H1 (cell line): ENCODE measurements at regions of chr5 and their contacts with region 1.

Region 1: GRCh38 chr5:118791926-118792734 is 196.2 kb downstream of the DTWD2 start:
- DNase-seq: peak in 1 of 2 experiments; percentile 2
- H3K4me3 ChIP-seq: no peak overlapping the region
- H3K27ac ChIP-seq: no peak overlapping the region
- H3K4me1 ChIP-seq: peaks cover 0 to 10% (median 4%) of the 10 kb centered on the region in 4 experiments; a peak in 5 of 7 replicates
- H3K27me3 ChIP-seq: no peaks in the 10 kb centered on the region
- CTCF ChIP-seq: peak in 2 of 3 experiments; percentile 65 to 81; a peak in 3 of 4 replicates
- EP300 ChIP-seq: no peak
- POLR2A ChIP-seq: no peak
- RAD21 ChIP-seq: peak; percentile 90 to 93

Region 2: GRCh38 chr5:118651002-118651401 is 141.1 kb before region 1 on chr5:
- CTCF ChIA-PET with region 1: interaction called, 12 read pairs
- POLR2A ChIA-PET with region 1: no interaction called
- DNase-seq: no peak
- H3K4me3 ChIP-seq: no peak overlapping the region
- H3K27ac ChIP-seq: no peak overlapping the region
- H3K4me1 ChIP-seq: peaks cover 0 to 2% (median 0%) of the 10 kb centered on the region in 4 experiments; a peak in 1 of 7 replicates
- H3K27me3 ChIP-seq: no peaks in the 10 kb centered on the region
- CTCF ChIP-seq: no peak
- EP300 ChIP-seq: no peak
- POLR2A ChIP-seq: no peak
- RAD21 ChIP-seq: no peak

Region 3: GRCh38 chr5:118692811-118693342 is 99.3 kb before region 1 on chr5:
- CTCF ChIA-PET with region 1: interaction called, 69 read pairs
- POLR2A ChIA-PET with region 1: no interaction called
- DNase-seq: peak in 1 of 2 experiments; percentile 1
- H3K4me3 ChIP-seq: no peak overlapping the region
- H3K27ac ChIP-seq: no peak overlapping the region
- H3K4me1 ChIP-seq: no peaks in the 10 kb centered on the region
- H3K27me3 ChIP-seq: no peaks in the 10 kb centered on the region
- CTCF ChIP-seq: peak in 2 of 3 experiments; percentile 24 to 47; a peak in 2 of 4 replicates
- EP300 ChIP-seq: no peak
- POLR2A ChIP-seq: no peak
- RAD21 ChIP-seq: peak; percentile 57 to 69

Region 4: GRCh38 chr5:118698774-118699173 is 93.4 kb before region 1 on chr5:
- CTCF ChIA-PET with region 1: interaction called, 69 read pairs
- POLR2A ChIA-PET with region 1: no interaction called
- DNase-seq: peak in 1 of 2 experiments; percentile 17
- H3K4me3 ChIP-seq: no peak overlapping the region
- H3K27ac ChIP-seq: no peak overlapping the region
- H3K4me1 ChIP-seq: no peaks in the 10 kb centered on the region
- H3K27me3 ChIP-seq: no peaks in the 10 kb centered on the region
- CTCF ChIP-seq: peak; percentile 46 to 73 (median 60)
- EP300 ChIP-seq: no peak
- POLR2A ChIP-seq: no peak
- RAD21 ChIP-seq: peak; percentile 82 to 86

Region 5: GRCh38 chr5:118752575-118753368 is 39.4 kb before region 1 on chr5:
- CTCF ChIA-PET with region 1: interaction called, 11 read pairs
- POLR2A ChIA-PET with region 1: no interaction called
- DNase-seq: no peak
- H3K4me3 ChIP-seq: no peak overlapping the region
- H3K27ac ChIP-seq: no peak overlapping the region
- H3K4me1 ChIP-seq: no peaks in the 10 kb centered on the region
- H3K27me3 ChIP-seq: no peaks in the 10 kb centered on the region
- CTCF ChIP-seq: no peak
- EP300 ChIP-seq: no peak
- POLR2A ChIP-seq: no peak
- RAD21 ChIP-seq: no peak

Region 6: DNA sequence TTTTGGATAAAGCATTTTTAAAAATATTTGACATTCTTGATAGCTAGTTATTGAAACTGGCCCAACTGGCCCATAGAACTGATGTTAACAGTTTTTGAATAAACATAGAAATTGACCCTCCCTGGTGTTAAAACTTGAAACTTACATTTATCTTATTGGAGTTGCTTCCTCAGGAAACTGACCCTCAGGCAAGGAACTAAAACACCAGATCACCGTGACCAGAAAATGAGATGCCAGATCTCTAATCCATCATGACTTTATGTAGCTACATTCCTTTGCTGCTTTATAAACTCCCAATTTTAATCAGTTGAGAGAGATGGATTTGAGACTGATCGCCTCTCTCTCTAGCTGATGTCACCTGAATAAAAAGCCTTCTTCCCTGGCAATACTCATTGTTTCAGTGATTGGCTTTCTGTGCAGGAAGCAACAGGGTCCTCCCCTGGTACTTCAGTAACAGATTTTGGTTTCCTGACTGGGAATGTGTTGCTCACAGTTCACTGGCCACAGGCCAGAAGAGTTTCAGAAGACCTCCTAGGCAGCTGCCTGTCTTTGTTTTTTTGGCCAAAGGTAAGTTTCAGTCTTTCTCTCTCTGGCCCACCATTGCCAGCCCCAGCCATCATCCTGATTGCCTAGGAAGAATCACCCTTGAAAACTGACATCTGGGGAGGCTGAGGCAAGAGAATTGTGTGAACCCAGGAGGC is 16.2 kb before region 1 on chr5:
- CTCF ChIA-PET with region 1: interaction called, 14 read pairs
- POLR2A ChIA-PET with region 1: no interaction called
- DNase-seq: no peak
- H3K4me3 ChIP-seq: no peak overlapping the region
- H3K27ac ChIP-seq: no peak overlapping the region
- H3K4me1 ChIP-seq: peaks cover 0 to 6% (median 2%) of the 10 kb centered on the region in 4 experiments; a peak in 1 of 7 replicates
- H3K27me3 ChIP-seq: no peaks in the 10 kb centered on the region
- CTCF ChIP-seq: no peak
- EP300 ChIP-seq: no peak
- POLR2A ChIP-seq: no peak
- RAD21 ChIP-seq: no peak

Region 7: GRCh38 chr5:118956727-118957126 is 164.6 kb after region 1 on chr5:
- CTCF ChIA-PET with region 1: interaction called, 48 read pairs
- POLR2A ChIA-PET with region 1: no interaction called
- DNase-seq: no peak
- H3K4me3 ChIP-seq: no peak overlapping the region
- H3K27ac ChIP-seq: no peak overlapping the region
- H3K4me1 ChIP-seq: peaks cover 0 to 10% (median 5%) of the 10 kb centered on the region in 4 experiments; a peak in 3 of 7 replicates
- H3K27me3 ChIP-seq: no peaks in the 10 kb centered on the region
- CTCF ChIP-seq: peak in 1 of 3 experiments; percentile 38; a peak in 2 of 4 replicates
- EP300 ChIP-seq: no peak
- POLR2A ChIP-seq: no peak
- RAD21 ChIP-seq: peak; percentile 59 to 76